Right lobe of liver (tissue), 6 donors: ENCODE measurements at regions of chr4 and their contacts with region 1.

Region 1: GRCh38 chr4:88792268-88792781 is 94.7 kb upstream of the NAP1L5 start:
- DNase-seq: no peak
- ATAC-seq: peak in 3 of 4 donors; percentile 14 to 67 (median 25)
- H3K4me3 ChIP-seq: no peak overlapping the region
- H3K27ac ChIP-seq: no peak overlapping the region
- H3K4me1 ChIP-seq: peaks cover 0 to 4% (median 0%) of the 10 kb centered on the region in 4 donors
- H3K27me3 ChIP-seq: no peaks in the 10 kb centered on the region
- CTCF ChIP-seq: no peak
- POLR2A ChIP-seq: no peak

Region 2: DNA sequence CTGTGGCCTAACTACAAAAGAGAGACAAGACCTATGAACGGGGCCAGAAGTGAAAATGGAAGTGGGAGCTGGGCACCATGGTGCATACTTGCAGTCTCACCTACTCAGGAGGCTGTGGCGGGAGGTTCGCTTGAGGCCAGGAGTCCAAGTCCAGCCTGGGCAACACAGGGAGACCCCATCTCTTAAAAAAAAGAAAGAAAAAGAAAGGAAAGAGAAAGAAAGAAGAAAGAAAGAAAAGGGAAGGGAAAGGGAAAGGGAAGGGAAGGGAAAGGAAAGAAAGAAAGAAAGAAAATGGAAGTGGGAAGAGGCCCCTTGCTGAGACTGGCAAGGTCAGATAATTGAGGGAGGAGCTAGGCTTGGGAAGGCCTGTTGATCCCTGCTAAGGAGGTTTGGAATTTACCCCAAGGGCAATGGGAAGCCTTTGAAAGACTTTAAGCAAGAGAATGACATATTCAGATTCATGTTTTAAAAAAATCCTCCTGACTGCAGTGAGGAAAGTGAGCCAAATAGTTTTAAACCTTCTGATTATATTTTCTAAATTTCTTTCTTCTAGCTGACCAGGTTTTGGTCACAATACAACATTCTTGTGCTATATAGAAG is 353.1 kb before region 1 on chr4:
- intact Hi-C with region 1: no loop called
- DNase-seq: no peak
- ATAC-seq: no peak
- H3K4me3 ChIP-seq: no peak overlapping the region
- H3K27ac ChIP-seq: no peak overlapping the region
- H3K4me1 ChIP-seq: no peaks in the 10 kb centered on the region
- H3K27me3 ChIP-seq: no peaks in the 10 kb centered on the region
- CTCF ChIP-seq: no peak
- POLR2A ChIP-seq: no peak

Region 3: DNA sequence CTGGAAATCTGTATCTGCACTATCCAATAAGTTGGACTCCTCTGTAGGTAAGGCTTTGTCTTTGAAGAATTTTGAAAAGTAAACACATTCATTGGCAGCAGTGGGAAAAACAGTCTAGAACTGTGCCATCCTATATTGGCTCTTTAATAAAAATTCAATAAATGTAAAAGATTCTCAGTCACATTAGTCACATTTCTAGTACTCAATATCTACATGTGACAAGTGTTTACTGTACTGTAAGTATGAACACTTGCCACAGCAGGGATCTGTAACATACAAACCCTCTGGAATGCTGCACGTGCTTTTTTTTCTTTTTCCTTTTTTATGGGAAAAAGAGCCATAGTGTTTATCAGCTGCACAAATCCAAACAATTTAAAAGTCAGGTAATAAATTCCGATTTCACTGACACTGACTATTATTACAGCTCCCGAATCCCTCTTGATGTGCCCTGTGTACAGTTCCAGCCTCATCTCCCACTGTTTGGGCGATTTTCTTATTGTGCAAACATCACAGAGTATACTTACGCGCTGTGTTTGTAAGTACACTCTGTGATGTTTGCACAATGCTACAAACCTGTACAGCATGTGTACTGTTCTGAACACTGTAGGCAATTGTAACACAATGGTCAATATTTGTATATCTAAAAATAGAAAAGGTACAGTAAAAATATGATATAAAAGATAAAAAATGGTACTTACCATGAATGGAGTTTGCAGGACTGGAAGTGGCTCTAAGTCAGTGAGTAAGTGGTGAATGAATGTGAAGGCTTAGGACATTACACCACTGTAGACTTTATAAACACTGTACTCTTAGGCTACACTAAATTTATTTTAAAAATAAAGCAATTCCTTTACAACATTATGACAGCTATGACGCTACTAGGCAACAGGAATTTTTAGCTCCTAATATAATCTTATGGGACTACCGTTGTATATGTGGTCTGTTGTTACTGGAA is 277.5 kb before region 1 on chr4:
- intact Hi-C with region 1: no loop called
- DNase-seq: no peak
- ATAC-seq: peak; percentile 81 to 92 (median 87)
- H3K4me3 ChIP-seq: no peak overlapping the region
- H3K27ac ChIP-seq: no peak overlapping the region
- H3K4me1 ChIP-seq: peaks cover 0 to 12% (median 0%) of the 10 kb centered on the region in 4 donors
- H3K27me3 ChIP-seq: no peaks in the 10 kb centered on the region
- CTCF ChIP-seq: no peak
- POLR2A ChIP-seq: no peak

Region 4: DNA sequence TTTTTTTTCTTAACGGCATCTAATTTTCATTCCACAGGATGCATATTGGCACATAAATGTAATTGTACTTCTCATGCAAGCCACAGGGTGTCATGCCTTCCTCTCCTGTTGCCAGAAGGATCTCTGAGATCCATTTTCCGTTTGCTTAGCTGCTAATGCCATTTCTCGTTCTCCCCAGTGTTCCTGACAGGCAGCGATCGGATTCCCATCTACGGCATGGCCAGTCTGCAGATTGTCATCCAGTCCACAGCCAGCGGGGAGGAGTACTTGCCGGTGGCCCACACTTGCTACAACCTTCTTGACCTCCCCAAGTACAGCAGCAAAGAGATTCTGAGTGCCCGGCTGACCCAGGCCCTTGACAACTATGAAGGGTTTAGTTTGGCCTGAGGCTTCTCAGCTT is 85.8 kb before region 1 on chr4:
- intact Hi-C with region 1: loop called in 1 of 2 experiments (anchors 5 kb)
- DNase-seq: peak in 1 of 3 donors; percentile 57
- ATAC-seq: peak; percentile 97 to 99 (median 98)
- H3K4me3 ChIP-seq: no peak overlapping the region
- H3K27ac ChIP-seq: peak overlapping the region in 1 of 3 donors; percentile 20
- H3K4me1 ChIP-seq: peaks cover 0 to 13% (median 0%) of the 10 kb centered on the region in 4 donors
- H3K27me3 ChIP-seq: no peaks in the 10 kb centered on the region
- CTCF ChIP-seq: peak; percentile 67 to 79 (median 72)
- POLR2A ChIP-seq: no peak

Region 5: DNA sequence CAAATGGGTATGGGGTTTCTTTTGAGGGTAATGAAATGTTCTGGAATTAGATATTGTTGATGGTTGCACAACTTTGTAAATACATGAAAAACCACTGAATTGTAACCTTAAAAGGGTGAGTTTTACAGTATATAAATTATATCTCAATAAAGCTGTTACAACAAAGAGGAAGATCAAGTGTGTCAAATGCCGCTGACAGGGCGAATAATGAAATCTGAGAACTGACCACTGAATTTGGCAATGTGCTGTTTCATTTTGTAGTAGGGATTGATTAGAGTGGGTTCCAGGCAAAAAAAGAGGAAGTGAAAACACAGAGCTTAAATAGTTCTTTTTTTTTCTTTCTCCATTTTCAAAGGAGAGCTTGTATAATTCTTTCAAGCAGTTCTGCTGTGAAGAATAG is 66.4 kb after region 1 on chr4:
- intact Hi-C with region 1: no loop called
- DNase-seq: no peak
- ATAC-seq: peak in 3 of 4 donors; percentile 42 to 56 (median 47)
- H3K4me3 ChIP-seq: no peak overlapping the region
- H3K27ac ChIP-seq: no peak overlapping the region
- H3K4me1 ChIP-seq: no peaks in the 10 kb centered on the region
- H3K27me3 ChIP-seq: no peaks in the 10 kb centered on the region
- CTCF ChIP-seq: no peak
- POLR2A ChIP-seq: no peak